ENCODE measurements at regions of chrX and their contacts with region 1.

Region 1: DNA sequence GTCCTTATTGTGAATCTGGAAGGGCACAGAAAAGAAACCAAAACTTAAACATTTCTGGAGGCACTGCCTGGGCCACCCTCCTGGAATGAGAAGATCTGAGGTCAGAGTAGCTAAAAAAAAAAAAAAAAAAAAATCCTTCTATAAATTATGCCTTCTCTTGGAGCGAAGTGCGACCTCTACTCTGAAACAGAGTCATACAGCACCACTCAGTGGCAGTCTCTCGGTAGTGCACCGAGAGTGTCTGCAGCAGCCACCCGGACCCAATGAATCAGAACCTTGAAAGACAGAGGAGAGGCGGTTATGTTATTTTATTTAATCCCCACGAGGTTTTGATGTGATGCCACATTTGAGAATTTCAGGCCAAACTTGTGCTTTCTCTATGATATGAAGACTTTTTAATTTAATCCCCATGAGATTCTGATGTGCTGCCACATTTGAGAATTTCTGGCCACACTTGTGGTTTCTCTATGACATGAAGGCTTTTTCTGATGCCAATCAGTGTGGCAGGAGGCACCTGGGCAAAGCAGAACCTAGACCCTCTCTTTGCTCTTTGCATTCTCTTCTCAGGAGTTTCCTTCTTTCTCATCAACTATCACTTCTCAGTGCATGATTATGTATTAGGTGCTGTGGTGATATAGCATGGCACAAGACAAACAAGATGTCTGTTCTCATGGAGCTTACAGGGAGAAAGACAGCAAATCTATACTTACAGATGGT is 5.6 kb upstream of the CT47C1 start:
- DNase-seq: peak; percentile 66
- H3K4me3 Mint-ChIP-seq: no peak overlapping the region
- H3K27ac Mint-ChIP-seq: no peak overlapping the region
- H3K4me1 Mint-ChIP-seq: no peaks in the 10 kb centered on the region
- H3K27me3 Mint-ChIP-seq: peaks cover 3% of the 10 kb centered on the region

Region 2: DNA sequence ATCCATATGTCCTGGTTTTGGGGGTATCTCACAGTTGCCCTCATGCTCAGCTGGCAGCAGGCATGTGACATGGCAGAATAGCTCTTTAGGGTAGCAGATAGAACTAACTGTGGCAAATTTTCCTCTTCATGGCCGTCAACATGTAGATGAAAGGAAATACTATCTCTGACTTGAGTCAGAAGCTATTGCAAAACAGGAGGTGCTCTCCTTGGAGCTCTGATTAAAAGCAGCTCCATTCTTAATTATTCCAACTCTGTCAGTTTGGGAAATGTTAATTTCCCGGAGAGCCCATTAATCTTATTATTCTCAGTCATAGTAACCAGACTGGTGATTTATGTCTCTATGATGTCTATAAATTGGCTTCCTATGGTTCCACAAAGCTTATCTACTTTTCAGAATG is 321.6 kb before region 1 on chrX:
- CTCF ChIA-PET with region 1: no interaction called
- POLR2A ChIA-PET with region 1: no interaction called
- intact Hi-C with region 1: no loop called
- DNase-seq: no peak
- H3K4me3 Mint-ChIP-seq: no peak overlapping the region
- H3K27ac Mint-ChIP-seq: no peak overlapping the region
- H3K4me1 Mint-ChIP-seq: no peaks in the 10 kb centered on the region
- H3K27me3 Mint-ChIP-seq: no peaks in the 10 kb centered on the region

Region 3: DNA sequence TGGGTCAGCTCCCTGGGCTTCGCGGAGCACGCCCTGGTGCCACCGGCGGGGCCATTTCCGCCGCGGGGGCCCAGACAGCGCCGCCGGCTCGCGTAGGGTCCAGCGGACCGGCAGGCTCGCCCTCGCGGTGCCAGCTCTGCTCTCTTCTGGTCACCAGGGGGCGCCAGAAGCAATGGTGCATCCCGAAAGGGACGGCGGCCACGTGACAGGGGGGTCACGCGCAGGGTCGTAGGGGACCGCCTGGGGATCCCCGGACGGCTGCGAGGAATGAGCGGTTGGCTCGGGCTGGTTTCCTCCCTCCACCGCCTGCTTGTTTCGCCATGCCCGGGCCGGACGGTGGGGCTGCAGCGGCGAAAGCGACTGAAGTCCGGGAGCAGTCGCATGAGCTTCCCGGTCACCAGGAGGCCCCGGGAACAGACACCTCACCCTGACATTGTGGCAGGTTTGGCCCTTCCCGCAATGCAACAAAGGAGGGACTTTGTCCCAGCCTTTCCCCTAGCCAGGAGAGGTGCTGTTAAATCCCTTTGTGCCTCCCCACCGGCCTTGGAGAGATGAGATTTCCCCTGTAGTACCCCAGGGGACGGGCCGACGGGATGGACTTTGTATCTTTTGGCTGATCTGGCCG is 227.7 kb before region 1 on chrX:
- CTCF ChIA-PET with region 1: interaction called, 11 read pairs
- POLR2A ChIA-PET with region 1: no interaction called
- intact Hi-C with region 1: no loop called
- DNase-seq: peak; percentile 70
- H3K4me3 Mint-ChIP-seq: peak overlapping the region; percentile 48
- H3K27ac Mint-ChIP-seq: no peak overlapping the region
- H3K4me1 Mint-ChIP-seq: no peaks in the 10 kb centered on the region
- H3K27me3 Mint-ChIP-seq: peaks cover 12% of the 10 kb centered on the region

Region 4: DNA sequence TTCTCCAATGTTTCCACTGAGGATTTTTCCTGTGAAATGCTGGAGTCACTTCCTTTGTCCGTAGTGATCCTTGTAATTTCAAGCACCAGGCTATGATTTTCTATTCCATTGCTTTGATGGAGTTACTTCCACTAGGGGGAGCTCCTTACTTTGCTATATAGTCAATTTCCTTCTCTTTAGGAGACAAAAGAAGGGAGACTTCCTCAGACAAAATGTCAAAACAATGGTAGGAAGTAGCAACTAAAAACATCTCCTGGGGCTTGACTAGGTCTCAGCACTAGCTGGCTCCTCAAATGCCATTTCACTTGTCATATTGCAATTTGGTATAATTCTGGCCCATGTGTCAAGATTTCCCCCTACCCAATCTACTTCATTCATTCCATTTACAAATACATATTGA is 219.5 kb before region 1 on chrX:
- CTCF ChIA-PET with region 1: interaction called, 38 read pairs
- POLR2A ChIA-PET with region 1: no interaction called
- intact Hi-C with region 1: loop called (anchors 1 kb)
- DNase-seq: no peak
- H3K4me3 Mint-ChIP-seq: no peak overlapping the region
- H3K27ac Mint-ChIP-seq: no peak overlapping the region
- H3K4me1 Mint-ChIP-seq: no peaks in the 10 kb centered on the region
- H3K27me3 Mint-ChIP-seq: peaks cover 2% of the 10 kb centered on the region

Region 5: GRCh38 chrX:118884552-118885138 is 182.5 kb before region 1 on chrX:
- CTCF ChIA-PET with region 1: no interaction called
- POLR2A ChIA-PET with region 1: no interaction called
- intact Hi-C with region 1: no loop called
- DNase-seq: no peak
- H3K4me3 Mint-ChIP-seq: no peak overlapping the region
- H3K27ac Mint-ChIP-seq: no peak overlapping the region
- H3K4me1 Mint-ChIP-seq: no peaks in the 10 kb centered on the region
- H3K27me3 Mint-ChIP-seq: peaks cover 6% of the 10 kb centered on the region

Region 6: DNA sequence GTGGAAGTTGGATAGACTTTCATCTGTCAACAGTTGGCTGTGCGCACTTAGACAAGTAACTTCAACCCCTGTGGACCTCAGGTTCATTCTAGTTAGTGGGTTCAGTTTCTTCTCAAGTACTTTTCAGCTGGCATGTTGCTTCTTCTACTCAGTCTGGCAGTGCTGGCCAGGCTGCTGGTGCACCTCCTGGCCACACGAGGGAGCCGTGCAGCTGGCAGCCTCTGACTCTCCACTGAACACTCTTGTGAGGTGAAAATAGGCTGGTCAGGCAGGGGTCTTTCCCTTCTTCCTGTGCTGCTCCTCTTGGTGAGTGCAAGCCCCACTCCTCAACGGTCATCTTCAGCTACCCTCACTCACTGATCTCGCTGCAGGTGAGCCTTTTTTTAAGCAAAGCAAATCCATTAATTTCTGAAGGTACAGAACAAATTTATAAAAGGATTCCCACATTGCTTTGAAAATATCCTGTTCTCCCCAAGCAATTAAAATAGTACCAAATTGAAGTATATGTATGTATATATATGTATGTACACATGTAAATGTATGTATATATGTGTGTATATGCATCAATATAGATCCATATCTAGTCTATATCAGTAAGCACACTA is 62.2 kb before region 1 on chrX:
- CTCF ChIA-PET with region 1: interaction called, 21 read pairs
- POLR2A ChIA-PET with region 1: no interaction called
- intact Hi-C with region 1: loop called (anchors 1 kb)
- DNase-seq: peak; percentile 63
- H3K4me3 Mint-ChIP-seq: no peak overlapping the region
- H3K27ac Mint-ChIP-seq: no peak overlapping the region
- H3K4me1 Mint-ChIP-seq: peaks cover 5% of the 10 kb centered on the region
- H3K27me3 Mint-ChIP-seq: no peaks in the 10 kb centered on the region

Region 7: GRCh38 chrX:119222932-119223331 is 155.8 kb after region 1 on chrX:
- CTCF ChIA-PET with region 1: no interaction called
- POLR2A ChIA-PET with region 1: no interaction called
- intact Hi-C with region 1: no loop called
- DNase-seq: no peak
- H3K4me3 Mint-ChIP-seq: no peak overlapping the region
- H3K27ac Mint-ChIP-seq: no peak overlapping the region
- H3K4me1 Mint-ChIP-seq: no peaks in the 10 kb centered on the region
- H3K27me3 Mint-ChIP-seq: peaks cover 7% of the 10 kb centered on the region

Measured in activated CD4-positive, alpha-beta memory T cell treated with anti-CD3 and anti-CD28 coated beads for 36 hours (primary cell).